ENCODE measurements at regions of chr1 and their contacts with region 1.

Region 1: GRCh38 chr1:171032822-171033702 is 57.6 kb upstream of the FMO3 start:
- DNase-seq: no peak
- ATAC-seq: no peak
- H3K4me3 ChIP-seq: no peak overlapping the region
- H3K27ac ChIP-seq: no peak overlapping the region
- H3K4me1 ChIP-seq: no peaks in the 10 kb centered on the region
- H3K27me3 ChIP-seq: no peaks in the 10 kb centered on the region
- CTCF ChIP-seq: no peak

Region 2: DNA sequence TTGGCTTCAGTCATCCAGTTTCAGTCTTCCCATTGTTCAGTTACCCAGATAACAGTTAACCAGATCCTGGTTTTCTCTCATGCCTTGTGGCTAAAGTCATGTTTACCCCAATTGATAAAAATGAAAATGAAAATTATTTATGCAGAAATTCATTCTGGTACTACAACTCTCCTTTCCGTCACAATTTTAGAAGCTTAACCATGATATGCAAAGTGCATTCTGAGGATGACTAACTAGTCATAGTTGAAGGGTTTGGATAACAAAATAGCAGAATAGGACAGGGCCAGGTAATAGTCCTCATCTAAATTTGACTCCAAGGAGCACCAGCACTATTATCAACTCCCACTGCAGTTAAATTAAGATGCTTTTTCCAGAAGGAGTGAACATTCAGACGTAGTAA is 792.7 kb before region 1 on chr1:
- CTCF ChIA-PET with region 1: no interaction called
- POLR2A ChIA-PET with region 1: interaction called, 17 read pairs
- in situ Hi-C with region 1: no loop called
- intact Hi-C with region 1: no loop called
- DNase-seq: no peak
- ATAC-seq: no peak
- H3K4me3 ChIP-seq: no peak overlapping the region
- H3K27ac ChIP-seq: no peak overlapping the region
- H3K4me1 ChIP-seq: no peaks in the 10 kb centered on the region
- H3K27me3 ChIP-seq: no peaks in the 10 kb centered on the region
- CTCF ChIP-seq: no peak

Measured in Panc1 (cell line).